ENCODE measurements at regions of chr4 and their contacts with region 1.

Region 1: GRCh38 chr4:119314356-119314755 is 7.6 kb downstream of the FABP2 start:
- DNase-seq: peak; percentile 36
- H3K4me3 ChIP-seq: no peak overlapping the region
- H3K27ac ChIP-seq: no peak overlapping the region
- H3K4me1 ChIP-seq: no peaks in the 10 kb centered on the region
- H3K27me3 ChIP-seq: no peaks in the 10 kb centered on the region
- CTCF ChIP-seq: peak; percentile 45 to 61

Region 2: GRCh38 chr4:119490335-119490734 is 176.0 kb after region 1 on chr4:
- CTCF ChIA-PET with region 1: no interaction called
- dilution Hi-C with region 1: no loop called
- in situ Hi-C with region 1: loop called in 1 of 2 experiments (anchors 25 kb)
- intact Hi-C with region 1: loop called (anchors 2 kb)
- DNase-seq: no peak
- H3K4me3 ChIP-seq: no peak overlapping the region
- H3K27ac ChIP-seq: no peak overlapping the region
- H3K4me1 ChIP-seq: no peaks in the 10 kb centered on the region
- H3K27me3 ChIP-seq: no peaks in the 10 kb centered on the region
- CTCF ChIP-seq: peak in 1 of 2 donors; percentile 27

Region 3: GRCh38 chr4:119559044-119559647 is 244.8 kb after region 1 on chr4:
- CTCF ChIA-PET with region 1: no interaction called
- dilution Hi-C with region 1: no loop called
- in situ Hi-C with region 1: no loop called
- intact Hi-C with region 1: loop called (anchors 5 kb)
- DNase-seq: peak; percentile 19
- H3K4me3 ChIP-seq: no peak overlapping the region
- H3K27ac ChIP-seq: no peak overlapping the region
- H3K4me1 ChIP-seq: no peaks in the 10 kb centered on the region
- H3K27me3 ChIP-seq: no peaks in the 10 kb centered on the region
- CTCF ChIP-seq: peak; percentile 22 to 52

Region 4: GRCh38 chr4:119628308-119629141 is 314.2 kb after region 1 on chr4 and contains the start of gene PDE5A:
- CTCF ChIA-PET with region 1: no interaction called
- dilution Hi-C with region 1: no loop called
- in situ Hi-C with region 1: no loop called
- intact Hi-C with region 1: loop called (anchors 1 kb)
- DNase-seq: peak; percentile 87
- H3K4me3 ChIP-seq: peak within 1 kb of the TSS; percentile 72 to 85 (median 81)
- H3K27ac ChIP-seq: no peak within 1 kb of the TSS
- H3K4me1 ChIP-seq: peaks cover 12% of the 10 kb centered on the region
- H3K27me3 ChIP-seq: no peaks in the 10 kb centered on the region
- CTCF ChIP-seq: peak; percentile 56 to 64
- total RNA-seq, gene PDE5A: 4.3 to 17.3 TPM

Region 5: GRCh38 chr4:119785963-119786362 is 471.6 kb after region 1 on chr4:
- CTCF ChIA-PET with region 1: no interaction called
- dilution Hi-C with region 1: no loop called
- in situ Hi-C with region 1: no loop called
- intact Hi-C with region 1: loop called (anchors 1 kb)
- DNase-seq: peak; percentile 5
- H3K4me3 ChIP-seq: no peak overlapping the region
- H3K27ac ChIP-seq: no peak overlapping the region
- H3K4me1 ChIP-seq: no peaks in the 10 kb centered on the region
- H3K27me3 ChIP-seq: no peaks in the 10 kb centered on the region
- CTCF ChIP-seq: peak; percentile 20 to 59

Measured in mammary epithelial cell (primary cell).